Right ventricle myocardium inferior (tissue), 1 donor: ENCODE measurements at regions of chr5 and their contacts with region 1.

Region 1: GRCh38 chr5:54295651-54296276 is 14.6 kb downstream of the ARL15 start:
- DNase-seq: no peak
- ATAC-seq: peak; percentile 94

Region 2: GRCh38 chr5:53814819-53815218 is 480.9 kb before region 1 on chr5:
- intact Hi-C with region 1: no loop called
- DNase-seq: no peak
- ATAC-seq: no peak

Region 3: DNA sequence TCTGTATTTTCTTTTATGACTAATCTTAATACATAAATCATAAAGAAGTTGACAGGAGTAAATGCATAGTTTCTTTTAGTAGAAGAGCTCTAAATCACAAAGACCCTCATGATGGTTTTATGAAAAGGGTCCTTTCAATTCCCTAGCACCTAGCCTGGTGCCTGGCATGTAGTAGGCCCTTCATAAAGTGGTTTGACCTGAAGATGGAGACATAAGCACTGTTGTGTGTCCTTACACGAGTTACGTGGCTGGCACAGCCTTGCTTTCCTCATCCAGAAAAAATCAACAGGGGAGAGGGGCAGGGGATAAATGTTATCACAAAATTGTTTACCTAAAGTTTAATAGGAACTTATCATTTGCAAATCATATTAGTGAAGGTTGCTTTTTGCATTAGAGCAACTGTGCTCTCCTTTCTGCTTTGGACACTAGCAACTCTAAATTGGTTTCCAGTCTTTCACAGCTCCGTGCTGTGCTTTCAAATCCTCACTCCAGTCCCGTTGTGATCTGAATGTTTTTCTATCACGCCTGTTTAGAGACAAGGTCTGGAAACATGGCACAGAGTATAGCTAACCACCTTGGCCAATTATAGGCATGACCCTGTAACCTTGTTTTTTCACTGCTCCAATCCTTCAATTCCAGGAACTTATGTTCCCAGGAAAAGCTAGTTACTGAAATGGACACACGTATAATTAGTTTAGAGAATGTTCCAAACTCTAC is 41.1 kb before region 1 on chr5:
- intact Hi-C with region 1: loop called (anchors 2 kb)
- DNase-seq: no peak
- ATAC-seq: peak; percentile 85

Region 4: GRCh38 chr5:54383225-54383901 is 87.6 kb after region 1 on chr5:
- intact Hi-C with region 1: no loop called
- DNase-seq: no peak
- ATAC-seq: peak; percentile 40

Region 5: GRCh38 chr5:54570916-54571315 is 275.2 kb after region 1 on chr5:
- intact Hi-C with region 1: no loop called
- DNase-seq: no peak
- ATAC-seq: peak; percentile 48

Region 6: GRCh38 chr5:54942064-54942778 is 646.5 kb after region 1 on chr5:
- intact Hi-C with region 1: no loop called
- DNase-seq: no peak
- ATAC-seq: no peak